ENCODE measurements at regions of chr3 and their contacts with region 1.

Region 1: GRCh38 chr3:49238274-49239127 is 38.5 kb downstream of the C3orf62 start:
- DNase-seq: peak; percentile 48 to 88 (median 62)
- ATAC-seq: peak; percentile 96
- H3K4me3 ChIP-seq: no peak overlapping the region
- H3K27ac ChIP-seq: peak overlapping the region; percentile 93
- H3K4me1 ChIP-seq: peaks cover 7 to 11% of the 10 kb centered on the region in 2 experiments; a peak in 4 of 5 replicates
- H3K27me3 ChIP-seq: no peaks in the 10 kb centered on the region
- CTCF ChIP-seq: no peak
- EP300 ChIP-seq: peak; percentile 95
- POLR2A ChIP-seq: no peak
- RAD21 ChIP-seq: peak in 1 of 2 experiments; percentile 16; a peak in 1 of 4 replicates

Region 2: DNA sequence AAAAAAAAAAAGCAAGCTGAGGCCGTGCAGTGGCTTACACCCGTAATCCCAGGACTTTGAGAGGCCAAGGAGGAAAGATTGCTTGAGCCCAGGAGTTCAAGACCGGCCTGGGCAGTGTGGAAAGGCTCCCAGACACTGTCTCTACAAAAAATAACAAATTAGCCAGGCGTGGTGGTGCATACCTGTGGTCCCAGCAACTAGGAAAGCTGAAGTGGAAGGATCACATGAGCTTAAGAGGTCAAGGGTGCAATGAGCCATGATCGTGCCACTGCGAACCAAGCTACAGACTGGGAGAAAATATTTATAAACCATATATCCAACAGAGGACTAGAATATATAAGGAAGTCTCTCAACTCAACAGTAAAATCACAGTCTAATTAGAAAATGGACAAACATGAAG is 57.1 kb before region 1 on chr3:
- CTCF ChIA-PET with region 1: no interaction called
- POLR2A ChIA-PET with region 1: no interaction called
- in situ Hi-C with region 1: no loop called
- intact Hi-C with region 1: no loop called
- DNase-seq: no peak
- ATAC-seq: no peak
- H3K4me3 ChIP-seq: no peak overlapping the region
- H3K27ac ChIP-seq: no peak overlapping the region
- H3K4me1 ChIP-seq: peaks cover 0 to 5% of the 10 kb centered on the region in 2 experiments; a peak in 1 of 5 replicates
- H3K27me3 ChIP-seq: no peaks in the 10 kb centered on the region
- CTCF ChIP-seq: no peak
- EP300 ChIP-seq: no peak
- POLR2A ChIP-seq: no peak
- RAD21 ChIP-seq: no peak

Region 3: GRCh38 chr3:49217688-49218470 is 20.6 kb before region 1 on chr3:
- CTCF ChIA-PET with region 1: no interaction called
- POLR2A ChIA-PET with region 1: interaction called, 3 read pairs
- in situ Hi-C with region 1: no loop called
- intact Hi-C with region 1: loop called (anchors 1 kb)
- DNase-seq: peak in 1 of 4 experiments; percentile 11
- ATAC-seq: peak; percentile 34
- H3K4me3 ChIP-seq: no peak overlapping the region
- H3K27ac ChIP-seq: peak overlapping the region; percentile 58; the same call in 2 of the 3 replicates
- H3K4me1 ChIP-seq: peaks cover 0 to 7% of the 10 kb centered on the region in 2 experiments; a peak in 3 of 5 replicates
- H3K27me3 ChIP-seq: no peaks in the 10 kb centered on the region
- CTCF ChIP-seq: no peak
- EP300 ChIP-seq: no peak
- POLR2A ChIP-seq: no peak
- RAD21 ChIP-seq: no peak